B cell (primary cell): ENCODE measurements at regions of chr16 and their contacts with region 1.

Region 1: GRCh38 chr16:3059000-3059722 is 6.3 kb upstream of the IL32 start:
- DNase-seq: peak; percentile 90
- ATAC-seq: peak; percentile 97
- H3K4me3 ChIP-seq: peak overlapping the region in 4 of 5 experiments; percentile 75 to 93 (median 82)
- H3K4me3 Mint-ChIP-seq: peak overlapping the region; percentile 87
- H3K27ac ChIP-seq: peak overlapping the region; percentile 38 to 74
- H3K27ac Mint-ChIP-seq: peak overlapping the region; percentile 65
- H3K4me1 ChIP-seq: peaks cover 20 to 22% of the 10 kb centered on the region in 2 donors
- H3K4me1 Mint-ChIP-seq: peaks cover 20% of the 10 kb centered on the region
- H3K27me3 ChIP-seq: peaks cover 0 to 6% (median 0%) of the 10 kb centered on the region in 4 experiments
- H3K27me3 Mint-ChIP-seq: no peaks in the 10 kb centered on the region
- CTCF ChIP-seq: peak; percentile 94

Region 2: DNA sequence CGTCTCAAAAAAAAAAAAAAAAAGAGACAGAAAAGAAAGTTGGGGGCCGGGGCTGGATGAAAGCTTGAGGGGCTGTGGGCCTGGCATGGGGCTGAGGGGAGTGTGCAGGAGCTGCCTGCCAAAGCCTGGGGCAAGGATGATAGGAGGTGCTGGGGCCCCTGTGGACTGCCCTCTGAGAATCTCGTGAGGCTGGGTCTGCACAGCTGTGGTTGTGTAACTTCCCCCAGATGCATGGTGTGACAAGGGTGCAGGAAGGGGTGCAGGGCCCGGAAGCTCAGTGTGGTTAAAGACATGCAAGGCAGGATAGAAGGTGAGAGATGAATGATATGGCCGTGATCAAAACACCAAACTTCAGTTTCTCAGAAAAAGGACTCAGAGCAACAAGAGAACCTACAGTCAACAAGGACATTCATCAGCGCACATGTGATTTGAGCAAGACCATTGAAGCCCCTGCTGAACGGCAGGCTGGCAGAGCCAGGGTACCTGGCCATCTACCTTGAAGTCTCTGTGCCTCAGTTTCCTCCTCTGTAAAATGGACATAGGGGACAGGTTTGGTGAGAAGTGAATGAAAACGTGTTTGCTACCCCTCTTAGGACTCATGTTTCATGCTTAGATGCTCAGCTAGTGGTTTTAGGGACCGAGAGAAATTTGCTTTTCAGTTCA is 15.8 kb after region 1 on chr16:
- CTCF ChIA-PET with region 1: interaction called, 33 read pairs
- POLR2A ChIA-PET with region 1: no interaction called
- intact Hi-C with region 1: loop called (anchors 2 kb)
- DNase-seq: peak; percentile 65
- ATAC-seq: peak; percentile 88
- H3K4me3 ChIP-seq: peak overlapping the region in 4 of 5 experiments; percentile 2 to 29 (median 12)
- H3K4me3 Mint-ChIP-seq: peak overlapping the region; percentile 77
- H3K27ac ChIP-seq: peak overlapping the region; percentile 32 to 74
- H3K27ac Mint-ChIP-seq: peak overlapping the region; percentile 89
- H3K4me1 ChIP-seq: peaks cover 39 to 41% of the 10 kb centered on the region in 2 donors
- H3K4me1 Mint-ChIP-seq: peaks cover 55% of the 10 kb centered on the region
- H3K27me3 ChIP-seq: no peaks in the 10 kb centered on the region
- H3K27me3 Mint-ChIP-seq: no peaks in the 10 kb centered on the region
- CTCF ChIP-seq: no peak

Region 3: GRCh38 chr16:3099732-3100499 is 40.8 kb after region 1 on chr16:
- CTCF ChIA-PET with region 1: interaction called, 15 read pairs
- POLR2A ChIA-PET with region 1: no interaction called
- intact Hi-C with region 1: loop called (anchors 2 kb)
- DNase-seq: peak; percentile 88
- ATAC-seq: peak; percentile 88
- H3K4me3 ChIP-seq: peak overlapping the region in 4 of 5 experiments; percentile 26 to 48 (median 36)
- H3K4me3 Mint-ChIP-seq: peak overlapping the region; percentile 83
- H3K27ac ChIP-seq: no peak overlapping the region
- H3K27ac Mint-ChIP-seq: peak overlapping the region; percentile 56
- H3K4me1 ChIP-seq: peaks cover 25 to 40% of the 10 kb centered on the region in 2 donors
- H3K4me1 Mint-ChIP-seq: peaks cover 32% of the 10 kb centered on the region
- H3K27me3 ChIP-seq: no peaks in the 10 kb centered on the region
- H3K27me3 Mint-ChIP-seq: no peaks in the 10 kb centered on the region
- CTCF ChIP-seq: no peak

Region 4: GRCh38 chr16:3134564-3135417 is 75.6 kb after region 1 on chr16 and contains the start of gene ZNF213:
- CTCF ChIA-PET with region 1: interaction called, 140 read pairs
- POLR2A ChIA-PET with region 1: interaction called, 13 read pairs
- intact Hi-C with region 1: no loop called
- DNase-seq: peak; percentile 97
- ATAC-seq: peak; percentile 98
- H3K4me3 ChIP-seq: peak within 1 kb of the TSS; percentile 70 to 99 (median 86)
- H3K4me3 Mint-ChIP-seq: peak within 1 kb of the TSS; percentile 98
- H3K27ac ChIP-seq: peak within 1 kb of the TSS; percentile 91 to 93
- H3K27ac Mint-ChIP-seq: peak within 1 kb of the TSS; percentile 97
- H3K4me1 ChIP-seq: peaks cover 15 to 20% of the 10 kb centered on the region in 2 donors
- H3K4me1 Mint-ChIP-seq: peaks cover 29% of the 10 kb centered on the region
- H3K27me3 ChIP-seq: no peaks in the 10 kb centered on the region
- H3K27me3 Mint-ChIP-seq: no peaks in the 10 kb centered on the region
- CTCF ChIP-seq: no peak
- total RNA-seq, gene ZNF213: 7.2 and 9.5 TPM in 2 replicates

Region 5: DNA sequence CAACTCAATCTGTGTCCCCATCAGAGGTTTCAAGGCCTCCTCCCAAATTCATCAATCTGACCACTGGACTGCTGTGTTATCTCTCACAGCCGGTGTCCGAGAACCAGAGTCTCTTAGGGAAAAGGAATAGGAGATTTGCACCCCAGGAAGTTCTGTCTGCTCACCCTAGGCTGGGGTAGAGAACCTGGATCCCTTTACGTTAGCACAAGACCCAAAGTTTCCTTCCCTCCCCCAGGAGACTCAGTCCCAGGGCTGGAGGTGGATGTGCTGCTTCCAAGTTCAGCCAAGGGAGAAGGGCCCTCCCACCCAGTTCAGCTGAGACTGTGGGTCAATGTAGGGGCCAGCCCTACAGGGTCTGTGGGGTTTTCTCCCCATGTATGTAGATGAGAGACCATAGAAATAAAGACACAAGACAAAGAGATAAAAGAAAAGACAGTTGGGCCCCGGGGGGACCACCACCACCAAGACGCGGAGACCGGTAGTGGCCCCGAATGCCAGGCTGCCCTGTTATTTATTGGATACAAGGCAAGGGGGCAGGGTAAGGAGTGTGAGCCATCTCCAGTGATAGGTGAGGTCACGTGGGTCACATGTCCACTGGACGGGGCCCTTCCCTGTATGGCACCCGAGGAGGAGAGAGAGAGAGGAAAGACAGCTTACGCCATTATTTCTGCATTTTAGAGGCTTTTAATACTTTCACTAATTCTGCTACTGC is 106.1 kb after region 1 on chr16:
- CTCF ChIA-PET with region 1: interaction called, 12 read pairs
- POLR2A ChIA-PET with region 1: interaction called, 10 read pairs
- intact Hi-C with region 1: loop called (anchors 1 kb)
- DNase-seq: no peak
- ATAC-seq: no peak
- H3K4me3 ChIP-seq: peak overlapping the region in 4 of 5 experiments; percentile 25 to 57 (median 44)
- H3K4me3 Mint-ChIP-seq: peak overlapping the region; percentile 63
- H3K27ac ChIP-seq: peak overlapping the region; percentile 38 to 68
- H3K27ac Mint-ChIP-seq: peak overlapping the region; percentile 65
- H3K4me1 ChIP-seq: peaks cover 8 to 9% of the 10 kb centered on the region in 2 donors
- H3K4me1 Mint-ChIP-seq: peaks cover 10% of the 10 kb centered on the region
- H3K27me3 ChIP-seq: peaks cover 0 to 28% (median 11%) of the 10 kb centered on the region in 4 experiments
- H3K27me3 Mint-ChIP-seq: peaks cover 12% of the 10 kb centered on the region
- CTCF ChIP-seq: no peak